ENCODE measurements at regions of chr14 and their contacts with region 1.

Region 1: GRCh38 chr14:23469127-23469905 is at the start of gene NGDN:
- DNase-seq: peak; percentile 98
- H3K4me3 ChIP-seq: peak within 1 kb of the TSS; percentile 66 to 96 (median 79)
- H3K27ac ChIP-seq: peak within 1 kb of the TSS; percentile 82 to 89 (median 86)
- H3K4me1 ChIP-seq: peaks cover 0 to 13% (median 7%) of the 10 kb centered on the region in 4 donors
- H3K27me3 ChIP-seq: no peaks in the 10 kb centered on the region
- CTCF ChIP-seq: peak; percentile 79 to 89 (median 86)
- EP300 ChIP-seq: no peak
- POLR2A ChIP-seq: peak; percentile 57 to 73
- total RNA-seq, gene NGDN: 23.3 to 46.2 (median 42.7) TPM

Region 2: GRCh38 chr14:23327947-23328744 is 141.2 kb before region 1 on chr14:
- intact Hi-C with region 1: loop called (anchors 5 kb)
- DNase-seq: peak; percentile 87
- H3K4me3 ChIP-seq: no peak overlapping the region
- H3K27ac ChIP-seq: no peak overlapping the region
- H3K4me1 ChIP-seq: peaks cover 0 to 14% (median 5%) of the 10 kb centered on the region in 4 donors
- H3K27me3 ChIP-seq: no peaks in the 10 kb centered on the region
- CTCF ChIP-seq: peak; percentile 77 to 90 (median 85)
- EP300 ChIP-seq: no peak
- POLR2A ChIP-seq: no peak

Region 3: GRCh38 chr14:23366426-23366921 is 102.8 kb before region 1 on chr14:
- intact Hi-C with region 1: loop called (anchors 2 kb)
- DNase-seq: peak; percentile 90
- H3K4me3 ChIP-seq: peak overlapping the region; percentile 42 to 75 (median 65)
- H3K27ac ChIP-seq: peak overlapping the region; percentile 92 to 98 (median 94)
- H3K4me1 ChIP-seq: peaks cover 0 to 53% (median 32%) of the 10 kb centered on the region in 4 donors
- H3K27me3 ChIP-seq: no peaks in the 10 kb centered on the region
- CTCF ChIP-seq: no peak
- EP300 ChIP-seq: no peak
- POLR2A ChIP-seq: no peak

Region 4: GRCh38 chr14:24442273-24443052 is 973.1 kb after region 1 on chr14 and contains the start of gene SDR39U1:
- intact Hi-C with region 1: loop called (anchors 2 kb)
- DNase-seq: peak; percentile 99
- H3K4me3 ChIP-seq: peak within 1 kb of the TSS; percentile 66 to 80 (median 70)
- H3K27ac ChIP-seq: peak within 1 kb of the TSS; percentile 95 to 99 (median 98)
- H3K4me1 ChIP-seq: peaks cover 0 to 31% (median 29%) of the 10 kb centered on the region in 4 donors
- H3K27me3 ChIP-seq: no peaks in the 10 kb centered on the region
- CTCF ChIP-seq: no peak
- EP300 ChIP-seq: no peak
- POLR2A ChIP-seq: peak; percentile 76 to 80
- total RNA-seq, gene SDR39U1: 30.3 to 45.4 (median 33.9) TPM

Measured in sigmoid colon (tissue), 7 donors.